Psoas muscle (tissue), 8 donors: ENCODE measurements at regions of chr7 and their contacts with region 1.

Region 1: GRCh38 chr7:157250605-157251228 is 86.1 kb upstream of the DNAJB6 start:
- DNase-seq: no peak
- ATAC-seq: peak; percentile 51 to 85 (median 69)
- H3K4me3 ChIP-seq: no peak overlapping the region
- H3K27ac ChIP-seq: no peak overlapping the region
- H3K4me1 ChIP-seq: no peaks in the 10 kb centered on the region
- H3K27me3 ChIP-seq: no peaks in the 10 kb centered on the region
- CTCF ChIP-seq: peak; percentile 63

Region 2: DNA sequence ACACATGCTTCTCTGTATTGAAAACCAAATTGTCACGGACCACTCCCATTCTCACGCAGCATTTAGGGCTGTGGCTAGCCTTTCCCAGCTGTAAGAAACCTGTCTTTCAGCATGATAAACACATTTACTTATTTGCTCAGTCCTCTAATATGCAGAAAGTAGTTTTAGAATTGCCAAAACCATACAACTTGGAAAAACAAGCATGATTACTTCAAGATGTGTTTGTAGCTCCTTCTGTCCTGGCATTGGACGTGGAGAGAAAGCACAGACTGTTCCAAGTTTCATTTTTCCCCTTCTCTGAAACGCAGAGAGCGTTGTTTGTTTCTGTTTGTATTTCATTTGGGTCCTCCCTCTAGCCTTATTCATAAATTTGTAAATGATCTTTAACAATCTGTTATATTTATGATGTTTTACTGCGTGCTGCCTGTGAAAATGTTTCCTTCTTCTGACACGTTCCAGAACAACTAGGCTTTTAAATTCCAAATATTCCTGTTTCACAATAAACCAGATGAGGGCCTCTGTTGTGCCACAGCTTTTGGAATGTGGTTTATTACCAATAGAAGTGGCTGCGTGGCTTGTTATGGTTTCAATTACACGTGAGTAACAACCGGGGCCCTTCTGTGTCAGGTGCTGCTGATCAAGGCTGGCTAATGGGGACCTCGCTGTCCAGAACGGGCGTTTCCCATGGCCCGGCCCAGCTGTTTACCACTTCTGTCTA is 266.4 kb before region 1 on chr7:
- intact Hi-C with region 1: no loop called
- DNase-seq: no peak
- ATAC-seq: peak in 3 of 4 donors; percentile 53 to 79 (median 70)
- H3K4me3 ChIP-seq: no peak overlapping the region
- H3K27ac ChIP-seq: no peak overlapping the region
- H3K4me1 ChIP-seq: no peaks in the 10 kb centered on the region
- H3K27me3 ChIP-seq: no peaks in the 10 kb centered on the region
- CTCF ChIP-seq: no peak

Region 3: GRCh38 chr7:157412021-157412443 is 161.3 kb after region 1 on chr7:
- intact Hi-C with region 1: loop called in 1 of 2 experiments (anchors 10 kb)
- DNase-seq: peak in 1 of 2 donors; percentile 23
- ATAC-seq: no peak
- H3K4me3 ChIP-seq: no peak overlapping the region
- H3K27ac ChIP-seq: no peak overlapping the region
- H3K4me1 ChIP-seq: no peaks in the 10 kb centered on the region
- H3K27me3 ChIP-seq: no peaks in the 10 kb centered on the region
- CTCF ChIP-seq: no peak